Brain microvascular endothelial cell (primary cell): ENCODE measurements at regions of chr1 and their contacts with region 1.

Region 1: GRCh38 chr1:231211005-231211857 is 29.8 kb upstream of the GNPAT start:
- DNase-seq: peak; percentile 49
- H3K4me3 ChIP-seq: peak overlapping the region; percentile 45
- H3K27ac ChIP-seq: no peak overlapping the region
- H3K27me3 ChIP-seq: no peaks in the 10 kb centered on the region
- CTCF ChIP-seq: peak; percentile 91

Region 2: GRCh38 chr1:230824571-230825062 is 386.6 kb before region 1 on chr1:
- in situ Hi-C with region 1: loop called (anchors 25 kb)
- DNase-seq: no peak
- H3K4me3 ChIP-seq: no peak overlapping the region
- H3K27ac ChIP-seq: no peak overlapping the region
- H3K27me3 ChIP-seq: no peaks in the 10 kb centered on the region
- CTCF ChIP-seq: no peak

Region 3: DNA sequence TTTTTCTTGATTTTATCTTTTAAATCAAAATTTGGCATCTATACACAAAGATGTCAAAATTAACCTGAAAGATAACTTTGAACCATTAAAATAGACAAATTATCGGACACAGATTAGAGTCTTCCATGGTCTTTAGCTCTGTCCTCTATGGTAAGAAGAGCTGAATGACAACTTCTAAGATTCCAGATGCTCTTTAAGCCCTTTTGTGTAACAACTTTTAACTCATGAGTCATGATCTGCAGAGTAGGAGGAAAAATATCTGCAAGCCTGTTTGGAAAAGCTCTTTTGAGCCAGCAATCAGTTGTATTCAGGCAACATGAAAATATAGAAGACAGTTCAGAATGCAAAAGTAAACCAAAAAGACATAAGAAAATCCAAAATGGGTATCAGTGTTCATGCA is 270.4 kb before region 1 on chr1:
- in situ Hi-C with region 1: loop called (anchors 25 kb)
- DNase-seq: no peak
- H3K4me3 ChIP-seq: no peak overlapping the region
- H3K27ac ChIP-seq: no peak overlapping the region
- H3K27me3 ChIP-seq: no peaks in the 10 kb centered on the region
- CTCF ChIP-seq: no peak

Region 4: DNA sequence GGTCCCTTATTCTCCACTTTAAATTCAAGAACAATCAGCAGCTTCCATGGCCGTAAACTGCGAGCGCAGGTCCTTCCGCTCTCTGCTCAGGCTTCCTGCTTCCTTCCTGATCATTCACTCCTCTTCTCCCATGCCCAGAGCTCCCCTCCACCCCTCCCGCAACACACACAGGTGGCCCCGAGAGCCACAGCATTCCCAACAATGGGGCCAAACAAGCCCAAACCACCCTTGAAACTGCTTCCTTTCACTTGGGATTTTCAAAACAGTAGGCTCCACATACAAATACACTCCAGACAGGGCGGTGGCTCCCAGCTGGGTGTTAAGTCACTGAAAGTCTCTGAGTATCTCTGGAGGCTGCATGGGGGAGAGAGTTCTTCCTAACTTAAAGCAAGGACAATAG is 182.5 kb before region 1 on chr1:
- in situ Hi-C with region 1: no loop called
- DNase-seq: no peak
- H3K4me3 ChIP-seq: no peak overlapping the region
- H3K27ac ChIP-seq: no peak overlapping the region
- H3K27me3 ChIP-seq: no peaks in the 10 kb centered on the region
- CTCF ChIP-seq: no peak

Region 5: GRCh38 chr1:231099996-231100767 is 111.0 kb before region 1 on chr1:
- in situ Hi-C with region 1: no loop called
- DNase-seq: no peak
- H3K4me3 ChIP-seq: no peak overlapping the region
- H3K27ac ChIP-seq: no peak overlapping the region
- H3K27me3 ChIP-seq: no peaks in the 10 kb centered on the region
- CTCF ChIP-seq: no peak

Region 6: GRCh38 chr1:231376875-231377549 is 165.8 kb after region 1 on chr1:
- in situ Hi-C with region 1: no loop called
- DNase-seq: no peak
- H3K4me3 ChIP-seq: no peak overlapping the region
- H3K27ac ChIP-seq: no peak overlapping the region
- H3K27me3 ChIP-seq: no peaks in the 10 kb centered on the region
- CTCF ChIP-seq: no peak